ENCODE measurements at regions of chr12 and their contacts with region 1.

Region 1: GRCh38 chr12:48350249-48351021 is at the start of gene ZNF641:
- H3K4me3 Mint-ChIP-seq: peak within 1 kb of the TSS; percentile 98
- H3K27ac Mint-ChIP-seq: peak within 1 kb of the TSS; percentile 99
- H3K4me1 Mint-ChIP-seq: peaks cover 60% of the 10 kb centered on the region
- H3K27me3 Mint-ChIP-seq: no peaks in the 10 kb centered on the region

Region 2: DNA sequence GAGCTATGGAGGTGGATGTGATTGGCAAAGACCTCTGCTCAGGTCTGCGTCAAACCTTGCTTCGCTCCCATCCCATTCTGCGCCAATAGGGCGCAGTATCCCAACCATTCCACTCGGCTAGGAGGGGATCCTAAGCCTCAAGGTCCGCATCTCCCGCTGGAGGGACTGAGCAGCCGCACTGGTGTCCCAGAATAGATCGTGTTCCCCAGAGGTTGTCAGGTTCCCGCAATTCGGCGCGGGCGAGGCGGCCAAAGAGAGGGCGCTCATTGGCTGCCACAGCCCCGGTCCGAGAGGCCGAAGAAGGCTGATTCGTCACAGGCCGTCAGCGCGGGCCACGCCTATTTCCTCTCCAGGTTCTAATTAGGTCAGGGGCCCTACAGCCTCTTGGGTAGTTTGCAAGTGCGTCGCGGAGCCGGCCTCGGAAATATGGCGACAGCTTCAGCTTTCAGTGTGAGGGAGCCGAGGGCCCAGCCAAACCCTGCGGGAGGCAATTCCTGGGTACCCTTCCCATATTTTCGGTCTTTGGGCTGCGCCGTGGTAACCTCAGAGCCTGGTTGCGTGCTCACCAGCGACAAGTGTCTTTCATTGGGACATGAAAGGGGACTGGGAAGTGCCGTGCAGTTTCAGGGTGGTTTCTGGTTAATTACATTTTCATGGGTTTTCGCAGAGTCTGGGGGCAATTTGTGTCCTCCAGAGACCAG is 152.3 kb before region 1 on chr12:
- intact Hi-C with region 1: loop called (anchors 2 kb)
- H3K4me3 Mint-ChIP-seq: peak overlapping the region; percentile 87
- H3K27ac Mint-ChIP-seq: peak overlapping the region; percentile 99
- H3K4me1 Mint-ChIP-seq: peaks cover 38% of the 10 kb centered on the region
- H3K27me3 Mint-ChIP-seq: peaks cover 8% of the 10 kb centered on the region

Region 3: DNA sequence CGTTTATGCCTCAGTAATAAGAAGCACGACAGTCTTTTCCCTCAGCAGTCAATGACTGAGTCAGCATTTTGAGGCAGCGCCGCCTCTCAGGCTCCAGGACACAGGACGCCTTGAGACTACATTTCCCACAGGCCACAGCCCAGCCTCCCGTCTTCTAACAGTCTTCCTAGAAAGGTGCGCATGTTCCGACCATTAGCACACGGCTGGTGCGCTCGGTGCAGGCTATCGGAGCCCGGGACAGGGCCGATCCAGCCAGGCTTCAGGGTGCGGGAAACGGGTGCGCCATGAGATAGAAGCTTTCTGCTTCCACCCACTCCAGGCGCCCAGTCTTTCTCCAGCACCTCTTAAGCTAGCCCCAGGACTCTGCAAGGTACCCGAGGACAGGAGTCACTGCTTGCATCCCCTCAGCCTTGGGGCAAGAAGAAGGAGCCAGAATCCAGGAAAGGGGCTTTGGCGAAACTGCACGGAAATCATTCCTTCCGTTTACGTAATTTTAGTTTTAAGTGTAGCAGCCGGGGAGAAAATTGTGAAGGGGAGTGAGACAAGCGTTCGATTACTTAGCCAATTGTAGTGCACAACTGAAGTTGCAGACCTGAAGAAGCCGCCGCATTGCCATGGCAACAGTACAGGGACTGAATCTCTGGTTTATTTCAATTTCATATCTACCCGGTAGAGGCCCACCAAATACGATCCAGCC is 53.7 kb before region 1 on chr12:
- intact Hi-C with region 1: loop called (anchors 5 kb)
- H3K4me3 Mint-ChIP-seq: peak overlapping the region; percentile 87
- H3K27ac Mint-ChIP-seq: peak overlapping the region; percentile 82
- H3K4me1 Mint-ChIP-seq: peaks cover 25% of the 10 kb centered on the region
- H3K27me3 Mint-ChIP-seq: peaks cover 4% of the 10 kb centered on the region

Measured in dendritic cell treated with granulocyte-macrophage colony-stimulating factor and Interleukin-4, amounts not matched to agents 40 ng/mL and 50 ng/mL, for 4 days (primary cell).